ENCODE measurements at regions of chr11 and their contacts with region 1.

Region 1: DNA sequence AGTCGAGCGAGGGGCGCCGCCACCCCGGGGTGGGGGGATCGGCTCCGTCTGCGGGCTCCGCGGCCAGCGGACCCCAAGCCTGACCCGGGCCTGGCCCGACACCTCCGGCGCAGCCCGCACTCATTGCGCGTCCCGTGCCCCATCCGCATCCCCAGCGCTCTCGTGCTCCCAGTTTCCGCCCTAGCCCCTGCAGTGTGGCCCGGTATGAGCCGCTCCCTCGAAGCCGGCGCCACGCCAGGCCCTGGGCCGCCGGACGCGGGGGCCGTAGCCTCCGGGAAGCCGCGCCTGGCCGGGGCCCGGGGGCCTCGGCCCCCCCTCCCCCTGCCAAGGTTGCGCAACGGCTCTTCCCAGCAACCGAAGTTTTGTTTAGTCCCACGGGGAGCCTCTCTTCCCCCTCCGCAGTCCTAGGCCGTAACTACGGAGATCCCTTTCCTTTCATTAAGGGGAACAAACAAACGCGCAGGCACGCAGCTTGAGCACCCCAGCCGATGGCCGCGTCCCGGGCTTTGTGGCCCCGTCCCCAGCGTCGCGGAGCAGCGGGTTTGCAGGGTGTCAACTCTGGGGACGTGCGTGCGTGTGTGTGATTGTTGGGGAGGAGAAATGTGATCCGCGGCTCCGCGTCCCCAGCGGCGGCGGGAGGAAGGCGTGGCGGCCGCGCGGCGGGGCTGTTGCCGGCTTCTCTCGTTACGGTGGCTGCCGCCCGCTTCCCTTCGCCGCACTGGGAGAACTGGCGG is 883 bp downstream of the HIPK3 start:
- DNase-seq: peak; percentile 89 to 91 (median 91)
- H3K4me3 ChIP-seq: peak overlapping the region; percentile 86 to 98 (median 96)
- H3K4me3 Mint-ChIP-seq: peak overlapping the region; percentile 99
- H3K27ac ChIP-seq: peak overlapping the region; percentile 99
- H3K27ac Mint-ChIP-seq: peak overlapping the region; percentile 98 to 100 (median 99)
- H3K4me1 ChIP-seq: peaks cover 49 to 59% of the 10 kb centered on the region in 2 donors
- H3K4me1 Mint-ChIP-seq: peaks cover 55% of the 10 kb centered on the region
- H3K27me3 ChIP-seq: no peaks in the 10 kb centered on the region
- H3K27me3 Mint-ChIP-seq: no peaks in the 10 kb centered on the region
- CTCF ChIP-seq: no peak

Region 2: GRCh38 chr11:33161120-33162005 is 96.7 kb before region 1 on chr11 and contains the start of gene CSTF3:
- intact Hi-C with region 1: loop called (anchors 2 to 5 kb)
- DNase-seq: peak; percentile 95 to 99 (median 98)
- H3K4me3 ChIP-seq: peak within 1 kb of the TSS; percentile 89 to 100 (median 91)
- H3K4me3 Mint-ChIP-seq: peak within 1 kb of the TSS; percentile 100
- H3K27ac ChIP-seq: peak within 1 kb of the TSS; percentile 75 to 93
- H3K27ac Mint-ChIP-seq: peak within 1 kb of the TSS; percentile 90 to 100 (median 99)
- H3K4me1 ChIP-seq: peaks cover 31 to 44% of the 10 kb centered on the region in 2 donors
- H3K4me1 Mint-ChIP-seq: peaks cover 42% of the 10 kb centered on the region
- H3K27me3 ChIP-seq: no peaks in the 10 kb centered on the region
- H3K27me3 Mint-ChIP-seq: peaks cover 0 to 4% (median 3%) of the 10 kb centered on the region in 3 donors
- CTCF ChIP-seq: peak; percentile 36
- polyA plus RNA-seq, gene CSTF3: 6.9 to 12.1 (median 7.1) TPM

Region 3: DNA sequence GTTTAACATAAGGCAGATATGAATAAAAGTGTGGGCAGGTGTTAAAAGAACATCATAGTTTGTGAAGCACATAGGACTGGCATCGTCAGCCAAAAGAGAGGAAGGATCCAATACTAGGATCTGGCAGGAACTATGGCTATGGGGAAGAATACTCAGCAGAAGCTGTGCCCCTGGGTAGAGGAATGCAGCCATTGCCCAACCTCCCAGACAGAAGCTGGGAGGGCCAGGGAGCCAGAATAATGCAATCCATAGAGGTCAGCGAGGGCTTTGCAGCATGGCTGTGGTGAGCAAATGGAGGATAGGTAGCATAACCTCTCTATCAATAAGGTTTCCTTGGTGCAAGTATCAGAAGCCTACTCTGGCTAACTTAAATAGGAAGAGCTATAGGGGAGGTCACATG is 85.1 kb before region 1 on chr11:
- intact Hi-C with region 1: loop called in 1 of 2 experiments (anchors 5 kb)
- DNase-seq: peak in 2 of 3 donors; percentile 43 to 46
- H3K4me3 ChIP-seq: no peak overlapping the region
- H3K4me3 Mint-ChIP-seq: peak overlapping the region in 1 of 2 donors; percentile 6
- H3K27ac ChIP-seq: peak overlapping the region in 1 of 2 donors; percentile 54
- H3K27ac Mint-ChIP-seq: peak overlapping the region in 6 of 7 donors; percentile 19 to 79 (median 69)
- H3K4me1 ChIP-seq: peaks cover 7 to 10% of the 10 kb centered on the region in 2 donors
- H3K4me1 Mint-ChIP-seq: peaks cover 18% of the 10 kb centered on the region
- H3K27me3 ChIP-seq: no peaks in the 10 kb centered on the region
- H3K27me3 Mint-ChIP-seq: peaks cover 0 to 4% (median 0%) of the 10 kb centered on the region in 3 donors
- CTCF ChIP-seq: no peak

Region 4: GRCh38 chr11:33195462-33196173 is 62.4 kb before region 1 on chr11:
- intact Hi-C with region 1: loop called in 1 of 2 experiments (anchors 5 kb)
- DNase-seq: peak; percentile 86 to 93 (median 92)
- H3K4me3 ChIP-seq: peak overlapping the region in 1 of 3 experiments; percentile 32
- H3K4me3 Mint-ChIP-seq: no peak overlapping the region
- H3K27ac ChIP-seq: peak overlapping the region; percentile 83 to 93
- H3K27ac Mint-ChIP-seq: peak overlapping the region; percentile 94 to 98 (median 96)
- H3K4me1 ChIP-seq: peaks cover 74 to 79% of the 10 kb centered on the region in 2 donors
- H3K4me1 Mint-ChIP-seq: peaks cover 62% of the 10 kb centered on the region
- H3K27me3 ChIP-seq: no peaks in the 10 kb centered on the region
- H3K27me3 Mint-ChIP-seq: peaks cover 0 to 1% (median 0%) of the 10 kb centered on the region in 3 donors
- CTCF ChIP-seq: no peak

Region 5: DNA sequence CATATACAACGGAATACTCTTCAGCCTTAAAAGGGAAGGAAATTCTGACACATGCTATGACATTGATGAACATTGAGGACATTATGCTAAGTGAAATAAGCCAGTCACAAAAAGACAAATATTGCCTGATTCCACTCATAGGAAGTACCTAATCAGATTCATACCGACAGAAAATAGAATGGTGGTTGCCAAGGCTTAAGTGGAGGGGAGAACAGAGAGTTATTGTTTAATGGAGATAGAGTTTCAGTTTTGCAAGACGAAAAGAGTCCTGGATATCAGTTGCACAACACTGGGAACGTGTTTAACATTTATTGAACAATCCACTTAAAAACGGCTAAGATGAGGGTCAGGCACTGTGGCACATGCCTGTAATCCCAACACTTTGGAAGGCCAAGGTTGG is 46.5 kb before region 1 on chr11:
- intact Hi-C with region 1: loop called in 1 of 2 experiments (anchors 5 kb)
- DNase-seq: peak; percentile 61 to 87 (median 83)
- H3K4me3 ChIP-seq: peak overlapping the region; percentile 33 to 62 (median 36)
- H3K4me3 Mint-ChIP-seq: peak overlapping the region; percentile 60 to 79
- H3K27ac ChIP-seq: peak overlapping the region; percentile 90 to 96
- H3K27ac Mint-ChIP-seq: peak overlapping the region; percentile 94 to 99 (median 97)
- H3K4me1 ChIP-seq: peaks cover 74 to 84% of the 10 kb centered on the region in 2 donors
- H3K4me1 Mint-ChIP-seq: peaks cover 59% of the 10 kb centered on the region
- H3K27me3 ChIP-seq: no peaks in the 10 kb centered on the region
- H3K27me3 Mint-ChIP-seq: peaks cover 0 to 2% (median 0%) of the 10 kb centered on the region in 3 donors
- CTCF ChIP-seq: no peak

Region 6: DNA sequence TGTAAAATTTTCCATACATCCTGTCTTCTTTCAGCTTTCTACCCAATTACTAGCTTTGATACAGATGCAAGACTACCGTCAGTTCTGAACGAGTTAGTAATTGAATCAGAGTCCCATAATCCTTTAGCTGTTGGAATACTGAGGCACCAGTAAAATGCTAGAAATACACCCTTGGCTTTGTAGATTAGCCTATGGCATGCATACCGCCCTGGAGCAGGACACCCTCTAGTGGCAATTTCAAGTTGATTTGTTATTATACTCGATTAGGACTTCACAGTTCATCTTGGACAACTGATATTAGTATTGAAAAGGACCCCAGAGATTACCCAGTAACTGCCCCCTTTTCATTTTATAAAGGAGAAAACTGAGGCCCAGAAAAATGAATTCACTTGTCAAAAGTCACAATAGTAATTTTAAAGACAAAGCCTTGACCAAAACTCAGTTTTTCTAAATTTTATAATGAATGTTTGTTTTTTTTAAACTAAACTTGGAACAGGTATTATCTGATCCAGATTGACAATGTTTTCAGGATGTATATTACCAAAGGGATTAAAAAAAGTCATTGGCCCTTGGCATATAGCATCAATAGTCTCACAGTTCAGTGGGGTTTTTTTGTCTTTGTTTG is 71.8 kb after region 1 on chr11:
- intact Hi-C with region 1: loop called in 1 of 2 experiments (anchors 10 kb)
- DNase-seq: peak; percentile 39 to 53 (median 49)
- H3K4me3 ChIP-seq: no peak overlapping the region
- H3K4me3 Mint-ChIP-seq: no peak overlapping the region
- H3K27ac ChIP-seq: peak overlapping the region in 1 of 2 donors; percentile 37
- H3K27ac Mint-ChIP-seq: peak overlapping the region in 2 of 7 donors; percentile 23 to 81
- H3K4me1 ChIP-seq: peaks cover 9 to 17% of the 10 kb centered on the region in 2 donors
- H3K4me1 Mint-ChIP-seq: peaks cover 20% of the 10 kb centered on the region
- H3K27me3 ChIP-seq: no peaks in the 10 kb centered on the region
- H3K27me3 Mint-ChIP-seq: no peaks in the 10 kb centered on the region
- CTCF ChIP-seq: peak; percentile 71

Region 7: GRCh38 chr11:34051349-34052035 is 793.4 kb after region 1 on chr11 and contains the start of gene CAPRIN1:
- intact Hi-C with region 1: loop called in 1 of 2 experiments (anchors 10 kb)
- DNase-seq: peak; percentile 70 to 77 (median 74)
- H3K4me3 ChIP-seq: peak within 1 kb of the TSS; percentile 71 to 100 (median 79)
- H3K4me3 Mint-ChIP-seq: peak within 1 kb of the TSS; percentile 98 to 99
- H3K27ac ChIP-seq: peak within 1 kb of the TSS; percentile 91 to 99
- H3K27ac Mint-ChIP-seq: peak within 1 kb of the TSS; percentile 90 to 97 (median 95)
- H3K4me1 ChIP-seq: peaks cover 16 to 39% of the 10 kb centered on the region in 2 donors
- H3K4me1 Mint-ChIP-seq: peaks cover 35% of the 10 kb centered on the region
- H3K27me3 ChIP-seq: no peaks in the 10 kb centered on the region
- H3K27me3 Mint-ChIP-seq: peaks cover 0 to 1% (median 0%) of the 10 kb centered on the region in 3 donors
- CTCF ChIP-seq: no peak
- polyA plus RNA-seq, gene CAPRIN1: 50.4 to 81.5 (median 59.2) TPM

Measured in CD14-positive monocyte (primary cell).